CD8-positive, alpha-beta memory T cell (primary cell): ENCODE measurements at regions of chr19 and their contacts with region 1.

Region 1: GRCh38 chr19:3586124-3586626 is 897 bp downstream of the GIPC3 start:
- DNase-seq: peak in 2 of 5 donors; percentile 14 to 55
- H3K4me3 ChIP-seq: peak overlapping the region; percentile 62
- H3K4me3 Mint-ChIP-seq: peak overlapping the region in 5 of 7 donors; percentile 43 to 78 (median 58)
- H3K27ac ChIP-seq: no peak overlapping the region
- H3K27ac Mint-ChIP-seq: peak overlapping the region in 1 of 8 donors; percentile 43
- H3K4me1 ChIP-seq: no peaks in the 10 kb centered on the region
- H3K4me1 Mint-ChIP-seq: no peaks in the 10 kb centered on the region
- H3K27me3 ChIP-seq: peaks cover 3% of the 10 kb centered on the region
- H3K27me3 Mint-ChIP-seq: no peaks in the 10 kb centered on the region

Region 2: DNA sequence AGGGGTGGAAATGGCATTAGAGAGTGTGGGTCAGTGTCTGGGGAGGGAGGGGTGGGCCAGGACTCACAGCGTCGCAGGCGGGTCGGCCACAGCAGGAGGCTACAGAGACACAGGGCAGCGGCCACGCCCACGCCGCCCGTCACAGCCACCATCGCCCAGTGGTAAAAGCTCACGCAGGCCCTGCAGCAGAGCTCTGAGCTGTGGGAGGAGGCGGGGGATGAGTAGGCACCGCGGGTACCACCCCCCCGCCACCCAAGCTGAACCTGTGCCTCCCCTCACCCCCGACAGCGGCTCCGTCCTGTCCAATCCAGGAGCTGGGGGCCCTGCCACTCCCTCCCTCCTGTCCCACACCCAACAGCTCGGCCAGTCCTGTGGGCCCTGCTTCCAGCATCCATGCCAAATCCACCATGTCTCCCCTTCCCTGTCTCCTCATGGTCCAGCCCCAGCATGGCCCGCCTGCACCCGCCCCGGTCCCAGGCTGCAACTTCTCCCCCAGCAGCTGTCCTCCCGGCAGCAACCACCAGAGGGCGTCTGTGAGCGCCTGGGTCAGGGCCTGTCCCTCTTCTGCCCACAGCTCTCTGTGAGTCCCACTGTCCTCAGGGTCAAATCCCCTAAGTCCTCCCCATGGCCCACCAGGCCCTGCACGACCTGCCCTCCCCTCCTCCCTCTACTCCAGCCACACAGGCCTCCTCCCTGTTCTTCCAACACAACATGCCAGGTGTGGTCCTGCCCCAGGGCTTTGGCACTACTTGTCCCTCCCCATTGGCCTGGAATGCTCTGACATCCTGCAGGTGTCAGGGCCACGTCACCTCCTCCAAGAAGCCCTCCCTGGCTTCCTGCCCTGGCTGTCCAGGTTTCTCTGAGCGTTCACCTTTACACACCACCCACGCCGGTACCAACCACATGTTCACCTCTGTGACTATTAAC is 41.2 kb before region 1 on chr19:
- CTCF ChIA-PET with region 1: interaction called, 18 read pairs
- POLR2A ChIA-PET with region 1: interaction called, 4 read pairs
- DNase-seq: peak; percentile 63 to 81 (median 72)
- H3K4me3 ChIP-seq: no peak overlapping the region
- H3K4me3 Mint-ChIP-seq: no peak overlapping the region
- H3K27ac ChIP-seq: no peak overlapping the region
- H3K27ac Mint-ChIP-seq: peak overlapping the region; percentile 47 to 86 (median 70)
- H3K4me1 ChIP-seq: no peaks in the 10 kb centered on the region
- H3K4me1 Mint-ChIP-seq: peaks cover 5 to 12% (median 8%) of the 10 kb centered on the region in 3 donors
- H3K27me3 ChIP-seq: no peaks in the 10 kb centered on the region
- H3K27me3 Mint-ChIP-seq: no peaks in the 10 kb centered on the region

Region 3: GRCh38 chr19:3557461-3558248 is 28.5 kb before region 1 on chr19 and contains the start of gene MFSD12:
- CTCF ChIA-PET with region 1: interaction called, 10 read pairs
- POLR2A ChIA-PET with region 1: no interaction called
- DNase-seq: peak; percentile 91 to 95 (median 92)
- H3K4me3 ChIP-seq: peak within 1 kb of the TSS; percentile 96
- H3K4me3 Mint-ChIP-seq: peak within 1 kb of the TSS; percentile 93 to 98 (median 95)
- H3K27ac ChIP-seq: peak within 1 kb of the TSS; percentile 72
- H3K27ac Mint-ChIP-seq: peak within 1 kb of the TSS; percentile 91 to 99 (median 95)
- H3K4me1 ChIP-seq: peaks cover 43% of the 10 kb centered on the region
- H3K4me1 Mint-ChIP-seq: peaks cover 32 to 38% (median 35%) of the 10 kb centered on the region in 3 donors
- H3K27me3 ChIP-seq: no peaks in the 10 kb centered on the region
- H3K27me3 Mint-ChIP-seq: no peaks in the 10 kb centered on the region
- total RNA-seq, gene MFSD12: 114 to 119 TPM

Region 4: DNA sequence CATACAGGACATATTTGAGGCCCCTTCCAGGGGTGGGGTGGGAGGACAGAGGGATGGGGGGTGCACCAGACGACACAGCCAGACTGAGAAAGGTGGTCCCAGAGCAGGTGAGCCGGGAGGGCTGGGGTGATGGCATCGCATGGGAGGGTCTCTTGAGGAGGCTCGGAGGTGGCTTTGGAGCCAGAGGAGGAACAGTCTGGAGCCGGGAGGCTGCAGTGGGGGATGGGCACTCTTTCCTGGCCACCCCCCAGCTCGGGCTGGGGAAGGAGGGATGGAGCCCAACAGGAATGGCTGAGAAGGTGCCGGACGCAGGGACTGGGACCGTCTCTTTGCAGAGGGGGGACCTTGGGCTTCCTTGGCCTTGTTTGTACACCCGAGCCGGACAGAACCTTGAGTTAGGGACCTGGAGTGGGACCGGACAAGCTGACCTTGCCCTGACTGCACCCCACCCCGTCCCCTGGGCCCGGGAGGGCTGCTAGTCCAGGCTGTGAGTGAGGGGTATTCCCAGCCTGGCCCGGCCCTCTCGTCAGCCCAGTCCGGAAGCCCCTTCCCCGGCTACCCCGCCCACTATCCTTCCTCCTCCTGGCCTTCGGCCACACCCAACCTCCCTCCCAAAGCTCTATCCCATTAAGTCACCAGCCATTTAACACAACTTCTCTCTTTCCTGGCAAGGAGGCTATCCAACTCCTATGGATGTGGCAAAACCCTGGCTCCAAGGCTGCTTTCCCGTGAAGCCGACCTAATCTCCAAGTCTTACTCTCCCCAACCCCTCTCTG is 21.3 kb after region 1 on chr19:
- CTCF ChIA-PET with region 1: interaction called, 14 read pairs
- POLR2A ChIA-PET with region 1: interaction called, 7 read pairs
- DNase-seq: peak in 1 of 5 donors; percentile 49
- H3K4me3 ChIP-seq: no peak overlapping the region
- H3K4me3 Mint-ChIP-seq: peak overlapping the region in 6 of 7 donors; percentile 47 to 87 (median 66)
- H3K27ac ChIP-seq: peak overlapping the region; percentile 73
- H3K27ac Mint-ChIP-seq: peak overlapping the region in 3 of 8 donors; percentile 26 to 84 (median 83)
- H3K4me1 ChIP-seq: peaks cover 29% of the 10 kb centered on the region
- H3K4me1 Mint-ChIP-seq: peaks cover 8 to 18% (median 13%) of the 10 kb centered on the region in 3 donors
- H3K27me3 ChIP-seq: no peaks in the 10 kb centered on the region
- H3K27me3 Mint-ChIP-seq: no peaks in the 10 kb centered on the region